Lower lobe of right lung (tissue), 2 donors: ENCODE measurements at regions of chr1 and their contacts with region 1.

Region 1: DNA sequence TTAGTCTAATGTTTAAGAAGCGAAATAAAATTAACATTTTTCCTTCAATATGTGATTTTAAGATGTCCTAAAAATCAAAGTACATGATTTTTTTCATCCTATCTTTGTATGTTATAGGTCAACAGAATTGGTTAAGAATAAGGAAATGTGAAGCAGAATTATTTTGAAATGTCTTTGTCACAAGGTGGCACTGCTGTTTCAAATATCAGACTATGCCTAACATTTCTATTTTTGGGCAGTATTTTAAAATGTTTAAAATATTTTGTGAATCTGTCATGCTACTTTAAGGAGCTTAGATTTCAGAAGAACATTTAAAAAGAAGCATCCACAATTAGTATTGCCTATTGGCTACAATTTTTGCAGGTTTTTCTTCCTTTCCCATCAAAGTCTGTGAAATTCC is 38.7 kb downstream of the AMY1C start:
- DNase-seq: no peak
- ATAC-seq: no peak
- H3K4me3 ChIP-seq: no peak overlapping the region
- H3K27ac ChIP-seq: no peak overlapping the region
- H3K4me1 ChIP-seq: no peaks in the 10 kb centered on the region
- H3K27me3 ChIP-seq: no peaks in the 10 kb centered on the region
- CTCF ChIP-seq: peak; percentile 15

Region 2: GRCh38 chr1:104105466-104105865 is 317.1 kb after region 1 on chr1:
- intact Hi-C with region 1: loop called (anchors 5 kb)
- DNase-seq: no peak
- ATAC-seq: no peak
- H3K4me3 ChIP-seq: no peak overlapping the region
- H3K27ac ChIP-seq: no peak overlapping the region
- H3K4me1 ChIP-seq: no peaks in the 10 kb centered on the region
- H3K27me3 ChIP-seq: no peaks in the 10 kb centered on the region
- CTCF ChIP-seq: no peak

Region 3: DNA sequence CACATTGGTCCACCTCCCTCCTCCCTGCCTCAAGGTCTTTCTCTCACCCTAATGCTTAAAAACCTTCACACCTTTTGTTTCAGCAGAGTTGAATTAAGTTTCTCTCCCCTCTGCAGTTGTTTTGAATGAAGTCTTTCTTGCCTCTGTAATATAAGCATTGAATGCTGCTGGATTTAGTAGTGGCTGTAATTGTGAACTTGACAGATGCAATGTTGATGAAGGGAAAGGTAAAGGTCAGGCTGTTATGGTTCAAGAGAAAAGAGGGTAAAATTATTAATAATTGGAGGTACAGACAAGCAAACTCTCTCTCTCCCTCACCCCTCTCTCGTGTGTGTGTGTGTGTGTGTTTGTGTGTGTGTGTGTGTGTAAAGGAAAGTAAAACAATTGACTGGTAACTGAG is 471.1 kb after region 1 on chr1:
- intact Hi-C with region 1: no loop called
- DNase-seq: no peak
- ATAC-seq: no peak
- H3K4me3 ChIP-seq: no peak overlapping the region
- H3K27ac ChIP-seq: no peak overlapping the region
- H3K4me1 ChIP-seq: no peaks in the 10 kb centered on the region
- H3K27me3 ChIP-seq: no peaks in the 10 kb centered on the region
- CTCF ChIP-seq: no peak